Activated T-helper 2 cell treated with anti-CD3 and anti-CD28 coated beads, Interferon-gamma antibody, Interleukin-2, Interleukin-4, amounts not matched to agents 10 μg/mL and 5 μg/mL and 100 μg/mL, durations not matched to agents 14 hours and 24 hours and 36 hours (primary cell): ENCODE measurements at regions of chr6 and their contacts with region 1.

Region 1: DNA sequence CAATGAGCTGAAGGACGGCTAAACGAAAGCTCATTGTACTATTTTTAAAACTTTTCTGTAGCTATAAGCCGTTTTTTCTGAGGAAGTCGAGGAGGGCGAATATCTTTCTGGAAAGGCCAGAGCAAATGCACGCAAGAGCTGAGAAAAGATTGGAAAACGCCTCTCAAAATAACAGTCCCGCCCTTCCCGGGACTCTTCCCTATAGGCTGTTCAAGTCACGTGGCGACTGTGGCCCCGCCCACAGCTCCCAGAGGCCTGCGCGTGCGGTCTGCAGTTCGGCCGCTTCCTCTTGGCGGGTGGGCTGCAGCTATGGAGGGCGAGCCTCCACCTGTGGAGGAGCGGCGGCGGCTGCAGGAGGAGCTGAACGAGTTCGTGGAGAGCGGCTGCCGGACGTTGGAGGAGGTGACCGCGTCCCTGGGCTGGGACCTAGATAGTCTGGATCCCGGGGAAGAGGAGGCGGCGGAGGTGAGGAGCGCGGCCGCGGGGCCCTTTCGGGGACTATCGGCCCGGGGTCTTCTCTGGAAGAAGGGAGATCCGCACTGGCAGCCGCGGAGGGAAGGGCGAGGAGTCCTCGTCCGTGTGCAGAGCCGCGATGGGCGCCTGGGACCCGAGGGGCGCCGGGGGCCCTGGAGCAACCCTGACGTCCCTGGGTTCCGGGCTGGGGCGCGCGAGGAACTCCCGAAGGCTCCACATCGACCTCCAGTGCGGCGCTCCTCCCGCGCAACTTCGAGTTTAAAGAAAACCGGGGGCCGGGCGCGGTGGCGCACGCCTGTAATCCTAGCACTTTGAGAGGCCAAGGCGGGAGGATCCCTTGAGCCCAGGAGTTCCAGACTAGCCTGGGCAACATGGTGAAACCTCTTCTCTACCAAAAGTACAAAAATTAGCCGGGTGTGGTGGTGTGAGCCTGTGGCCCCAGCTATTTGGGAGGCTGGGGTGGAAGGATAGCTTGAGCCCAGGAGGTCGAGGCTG is at the start of gene SNRNP48:
- DNase-seq: peak; percentile 88
- H3K4me3 Mint-ChIP-seq: peak within 1 kb of the TSS; percentile 94
- H3K27ac Mint-ChIP-seq: peak within 1 kb of the TSS; percentile 92
- H3K4me1 Mint-ChIP-seq: peaks cover 28% of the 10 kb centered on the region
- H3K27me3 Mint-ChIP-seq: peaks cover 2% of the 10 kb centered on the region
- total RNA-seq, gene SNRNP48: 16.8 and 17.7 TPM in 2 replicates

Region 2: GRCh38 chr6:7389451-7390225 is 200.6 kb before region 1 on chr6 and contains the starts of genes CAGE1 and RIOK1:
- intact Hi-C with region 1: loop called (anchors 2 kb)
- DNase-seq: peak; percentile 93
- H3K4me3 Mint-ChIP-seq: peak within 1 kb of the TSS; percentile 92
- H3K27ac Mint-ChIP-seq: peak within 1 kb of the TSS; percentile 99
- H3K4me1 Mint-ChIP-seq: peaks cover 27% of the 10 kb centered on the region
- H3K27me3 Mint-ChIP-seq: no peaks in the 10 kb centered on the region
- total RNA-seq, gene CAGE1: 0.16 TPM in 2 replicates
- total RNA-seq, gene RIOK1: 44.4 and 53.3 TPM in 2 replicates